ENCODE measurements at regions of chr6 and their contacts with region 1.

Region 1: DNA sequence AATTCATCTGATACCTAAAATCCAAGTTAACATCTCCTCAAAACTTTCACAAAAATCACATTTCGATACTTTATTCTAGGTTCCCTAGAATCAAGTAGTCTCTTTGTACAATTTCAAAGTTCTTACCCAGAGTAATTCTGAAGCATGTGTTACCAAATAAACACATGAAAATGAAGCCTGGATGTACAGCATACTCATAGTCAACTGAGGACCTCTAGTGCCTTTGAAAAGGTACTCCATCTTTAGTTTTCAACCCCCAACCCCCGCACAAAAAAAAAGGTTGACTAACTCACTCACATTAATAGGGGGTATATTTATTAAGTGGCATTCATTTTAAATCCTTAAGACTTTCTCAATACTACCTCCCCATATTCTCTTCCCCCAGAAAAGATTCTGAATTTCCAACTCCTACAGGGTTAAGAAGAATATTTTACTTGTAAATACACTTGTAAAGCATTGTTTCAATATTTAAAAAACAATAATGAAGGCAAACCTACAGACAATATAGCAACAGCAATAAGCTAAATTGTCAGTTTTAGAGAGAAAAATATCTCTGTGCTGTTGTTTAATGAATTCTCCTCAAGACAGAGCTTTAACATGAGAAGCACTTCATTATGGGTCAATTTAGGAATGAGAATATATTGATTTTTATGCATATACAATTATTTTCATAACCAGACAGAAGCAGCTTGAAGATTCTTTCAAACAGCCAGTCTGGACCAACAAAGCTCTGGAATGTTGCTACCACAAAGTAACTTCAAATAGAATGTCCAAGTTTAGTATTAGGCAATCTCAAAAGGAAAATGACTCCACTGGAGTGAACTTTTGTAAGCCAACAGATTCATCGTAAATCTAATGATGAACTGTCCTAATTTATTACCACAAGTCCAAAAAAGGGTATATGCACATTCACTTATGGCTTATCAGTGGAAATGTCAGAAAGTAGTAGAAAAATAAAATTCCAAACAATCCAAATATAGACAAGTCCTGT is 3.3 kb downstream of the PLN start:
- DNase-seq: peak; percentile 56
- ATAC-seq: peak; percentile 53; the same call in 1 of the 2 replicates
- H3K4me3 ChIP-seq: no peak overlapping the region
- H3K27ac ChIP-seq: no peak overlapping the region
- H3K4me1 ChIP-seq: no peaks in the 10 kb centered on the region
- H3K27me3 ChIP-seq: no peaks in the 10 kb centered on the region
- CTCF ChIP-seq: peak; percentile 67

Region 2: DNA sequence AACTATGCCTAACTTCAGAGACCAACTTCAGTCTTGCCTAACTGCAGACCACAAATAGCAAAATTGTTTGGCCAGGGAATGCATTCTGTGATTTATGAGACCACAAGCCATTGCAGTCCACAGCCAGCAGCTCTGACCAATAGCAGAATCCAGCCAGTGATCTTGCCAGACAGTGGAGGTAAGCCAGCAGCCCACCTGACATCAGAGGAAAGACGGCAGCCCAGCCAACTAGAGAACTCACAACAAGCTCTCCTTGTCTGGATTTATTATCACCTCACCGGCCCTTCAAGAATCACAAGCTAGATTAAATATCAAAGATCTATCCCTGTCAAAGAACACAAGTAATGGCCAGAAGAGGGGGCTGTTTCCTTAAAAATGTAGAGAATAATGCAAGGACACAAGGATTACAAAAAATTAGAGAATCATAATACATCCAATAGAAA is 710.8 kb before region 1 on chr6:
- CTCF ChIA-PET with region 1: no interaction called
- POLR2A ChIA-PET with region 1: no interaction called
- intact Hi-C with region 1: loop called (anchors 5 kb)
- DNase-seq: peak; percentile 65
- ATAC-seq: peak; percentile 54
- H3K4me3 ChIP-seq: no peak overlapping the region
- H3K27ac ChIP-seq: no peak overlapping the region
- H3K4me1 ChIP-seq: no peaks in the 10 kb centered on the region
- H3K27me3 ChIP-seq: no peaks in the 10 kb centered on the region
- CTCF ChIP-seq: peak; percentile 68

Region 3: GRCh38 chr6:117976030-117976651 is 575.2 kb before region 1 on chr6:
- CTCF ChIA-PET with region 1: no interaction called
- POLR2A ChIA-PET with region 1: no interaction called
- intact Hi-C with region 1: loop called (anchors 5 kb)
- DNase-seq: peak; percentile 61
- ATAC-seq: no peak
- H3K4me3 ChIP-seq: no peak overlapping the region
- H3K27ac ChIP-seq: no peak overlapping the region
- H3K4me1 ChIP-seq: no peaks in the 10 kb centered on the region
- H3K27me3 ChIP-seq: no peaks in the 10 kb centered on the region
- CTCF ChIP-seq: peak; percentile 75

Region 4: DNA sequence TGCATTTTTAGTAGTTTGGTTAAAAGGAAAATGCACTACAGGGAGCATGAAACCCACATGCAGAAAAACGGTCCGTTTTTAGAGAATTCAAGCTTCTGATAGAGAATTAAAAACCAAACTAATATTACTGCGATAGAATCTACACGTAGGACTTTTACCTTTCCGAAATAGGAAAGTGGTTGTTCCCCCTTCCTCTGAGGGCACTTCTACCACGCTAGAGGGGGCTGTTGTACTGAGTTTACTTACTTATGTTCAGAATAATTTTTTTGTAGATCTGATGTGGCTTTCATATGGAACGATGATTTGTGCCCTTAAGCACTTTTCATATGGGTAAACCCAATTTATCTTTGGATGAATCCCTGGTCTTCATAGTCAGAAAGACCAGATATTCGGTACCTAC is 267.6 kb before region 1 on chr6:
- CTCF ChIA-PET with region 1: no interaction called
- POLR2A ChIA-PET with region 1: no interaction called
- intact Hi-C with region 1: loop called (anchors 1 kb)
- DNase-seq: peak; percentile 71
- ATAC-seq: peak; percentile 77
- H3K4me3 ChIP-seq: no peak overlapping the region
- H3K27ac ChIP-seq: no peak overlapping the region
- H3K4me1 ChIP-seq: no peaks in the 10 kb centered on the region
- H3K27me3 ChIP-seq: no peaks in the 10 kb centered on the region
- CTCF ChIP-seq: peak; percentile 84

Region 5: GRCh38 chr6:118509009-118509617 is 42.2 kb before region 1 on chr6:
- CTCF ChIA-PET with region 1: no interaction called
- POLR2A ChIA-PET with region 1: no interaction called
- intact Hi-C with region 1: loop called (anchors 2 kb)
- DNase-seq: peak; percentile 54
- ATAC-seq: no peak
- H3K4me3 ChIP-seq: no peak overlapping the region
- H3K27ac ChIP-seq: no peak overlapping the region
- H3K4me1 ChIP-seq: no peaks in the 10 kb centered on the region
- H3K27me3 ChIP-seq: no peaks in the 10 kb centered on the region
- CTCF ChIP-seq: peak; percentile 82